ENCODE measurements at regions of chr2 and their contacts with region 1.

Region 1: DNA sequence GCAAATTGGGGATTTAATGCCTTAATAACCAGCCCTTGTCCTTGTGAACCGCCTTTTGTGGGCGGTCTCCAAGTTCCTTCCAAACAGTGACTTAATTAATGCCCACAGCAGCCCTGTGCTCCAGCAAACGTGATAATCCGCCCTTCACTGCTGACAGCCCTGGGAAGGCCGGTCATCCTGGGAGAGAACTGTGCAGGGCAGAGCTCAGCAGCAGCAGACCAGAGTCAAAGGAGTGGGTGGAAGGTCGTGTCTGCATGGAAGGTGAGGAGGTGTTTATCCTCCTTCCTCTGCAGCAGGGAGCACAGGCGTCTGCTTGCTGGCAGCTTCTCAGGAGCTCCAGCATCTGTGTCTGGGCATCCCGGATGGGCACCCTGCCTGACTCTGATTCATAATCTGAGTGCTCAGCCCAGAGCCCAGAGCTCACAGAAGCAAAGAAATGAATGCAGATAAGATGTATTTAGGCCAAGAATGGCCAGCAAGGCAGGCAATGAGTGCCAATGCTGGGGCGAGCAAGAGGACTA is 270.0 kb upstream of the PXDN start:
- DNase-seq: peak; percentile 76 to 95 (median 92)
- H3K4me3 ChIP-seq: peak overlapping the region in 33 of 59 donors; percentile 1 to 53 (median 22)
- H3K27ac ChIP-seq: peak overlapping the region; percentile 40 to 97 (median 87)
- H3K27me3 ChIP-seq: no peaks in the 10 kb centered on the region
- CTCF ChIP-seq: peak in 8 of 56 donors; percentile 2 to 21 (median 12)

Region 2: GRCh38 chr2:1550658-1551316 is 463.5 kb before region 1 on chr2:
- intact Hi-C with region 1: no loop called
- DNase-seq: peak in 7 of 10 donors; percentile 45 to 75 (median 55)
- H3K4me3 ChIP-seq: peak overlapping the region in 1 of 59 donors; percentile 18
- H3K27ac ChIP-seq: no peak overlapping the region
- H3K27me3 ChIP-seq: peaks cover 0 to 8% (median 0%) of the 10 kb centered on the region in 45 donors
- CTCF ChIP-seq: peak; percentile 74 to 98 (median 93)

Region 3: GRCh38 chr2:1931003-1931914 is 83.1 kb before region 1 on chr2:
- intact Hi-C with region 1: loop called in 1 of 2 experiments (anchors 10 kb)
- DNase-seq: peak in 8 of 10 donors; percentile 38 to 84 (median 73)
- H3K4me3 ChIP-seq: peak overlapping the region in 1 of 59 donors; percentile 9
- H3K27ac ChIP-seq: peak overlapping the region in 58 of 59 donors; percentile 13 to 94 (median 80)
- H3K27me3 ChIP-seq: no peaks in the 10 kb centered on the region
- CTCF ChIP-seq: no peak

Region 4: GRCh38 chr2:1964659-1965058 is 49.7 kb before region 1 on chr2:
- intact Hi-C with region 1: no loop called
- DNase-seq: no peak
- H3K4me3 ChIP-seq: no peak overlapping the region
- H3K27ac ChIP-seq: no peak overlapping the region
- H3K27me3 ChIP-seq: no peaks in the 10 kb centered on the region
- CTCF ChIP-seq: no peak

Region 5: DNA sequence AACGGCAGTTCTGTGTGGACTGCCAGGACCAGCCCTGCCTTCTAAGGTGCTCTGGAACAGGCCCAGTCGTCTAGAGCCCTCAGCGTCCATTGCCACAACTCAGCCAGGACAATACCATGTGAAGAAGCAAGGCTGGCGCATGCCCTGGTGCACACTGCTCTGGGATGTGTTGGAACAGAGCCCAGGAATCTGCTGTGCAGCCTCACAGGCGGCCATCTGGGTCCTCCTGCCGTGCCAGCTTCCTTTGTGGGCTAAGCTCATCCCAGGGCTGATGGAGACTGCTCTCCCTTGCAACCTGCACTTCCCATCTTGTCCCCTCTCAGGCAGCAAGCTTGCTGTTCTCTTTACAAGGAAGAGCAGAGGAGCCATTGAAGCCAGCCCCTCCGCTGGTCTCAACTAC is 23.6 kb before region 1 on chr2:
- intact Hi-C with region 1: loop called (anchors 1 to 2 kb)
- DNase-seq: peak; percentile 81 to 95 (median 92)
- H3K4me3 ChIP-seq: peak overlapping the region in 8 of 59 donors; percentile 1 to 31 (median 20)
- H3K27ac ChIP-seq: peak overlapping the region; percentile 34 to 97 (median 85)
- H3K27me3 ChIP-seq: no peaks in the 10 kb centered on the region
- CTCF ChIP-seq: peak in 13 of 56 donors; percentile 7 to 36 (median 16)

Region 6: GRCh38 chr2:2101924-2102323 is 87.6 kb after region 1 on chr2:
- intact Hi-C with region 1: loop called in 1 of 2 experiments (anchors 10 kb)
- DNase-seq: no peak
- H3K4me3 ChIP-seq: no peak overlapping the region
- H3K27ac ChIP-seq: peak overlapping the region in 1 of 59 donors; percentile 26
- H3K27me3 ChIP-seq: no peaks in the 10 kb centered on the region
- CTCF ChIP-seq: peak in 26 of 56 donors; percentile 8 to 41 (median 20)

Measured in dorsolateral prefrontal cortex (tissue), 120 donors.